Cardiac septum (tissue), 1 donor: ENCODE measurements at regions of chr5 and their contacts with region 1.

Region 1: GRCh38 chr5:140690941-140691924 is at the starts of genes HARS1 and HARS2:
- DNase-seq: peak; percentile 96
- total RNA-seq, gene HARS1: 37.8 TPM
- total RNA-seq, gene HARS2: 29.7 TPM

Region 2: DNA sequence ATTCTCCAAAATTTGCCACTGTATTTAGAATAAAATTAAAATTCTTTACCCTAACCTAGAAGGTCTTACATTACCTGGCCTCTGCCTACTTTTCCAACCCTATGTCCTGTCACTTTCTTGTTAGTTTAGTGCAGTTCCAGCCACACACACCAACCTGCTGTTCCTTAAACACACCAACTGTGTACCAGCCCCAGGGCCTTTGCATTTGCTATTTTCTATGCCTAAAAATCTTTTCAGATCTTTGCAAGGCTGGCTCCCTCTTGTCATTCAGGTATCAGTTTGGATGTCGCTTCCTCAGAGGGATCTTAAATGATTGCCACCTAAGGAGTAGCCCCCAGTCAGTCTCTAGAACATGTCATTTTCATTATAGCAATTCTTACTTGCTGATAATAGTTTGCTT is 630.4 kb before region 1 on chr5:
- intact Hi-C with region 1: no loop called
- DNase-seq: no peak

Region 3: DNA sequence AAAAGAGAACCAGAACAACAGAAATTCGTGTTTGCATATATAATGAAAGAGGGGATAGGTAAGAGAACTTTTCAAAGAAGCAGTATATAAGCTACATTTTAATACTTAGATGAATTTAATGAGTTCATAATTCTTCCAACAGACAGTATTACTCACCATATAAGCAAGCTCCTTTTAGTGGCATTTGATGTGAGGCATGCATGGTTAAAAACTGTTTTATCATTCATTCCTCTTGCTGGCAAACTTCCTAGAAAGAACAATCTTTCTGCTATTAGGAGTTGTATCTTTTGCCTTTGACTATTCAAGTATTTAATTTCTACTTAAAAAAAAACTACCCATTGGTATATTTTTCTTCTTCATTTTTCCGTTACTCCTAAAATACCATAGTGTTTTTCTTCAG is 209.5 kb before region 1 on chr5:
- intact Hi-C with region 1: no loop called
- DNase-seq: no peak

Region 4: DNA sequence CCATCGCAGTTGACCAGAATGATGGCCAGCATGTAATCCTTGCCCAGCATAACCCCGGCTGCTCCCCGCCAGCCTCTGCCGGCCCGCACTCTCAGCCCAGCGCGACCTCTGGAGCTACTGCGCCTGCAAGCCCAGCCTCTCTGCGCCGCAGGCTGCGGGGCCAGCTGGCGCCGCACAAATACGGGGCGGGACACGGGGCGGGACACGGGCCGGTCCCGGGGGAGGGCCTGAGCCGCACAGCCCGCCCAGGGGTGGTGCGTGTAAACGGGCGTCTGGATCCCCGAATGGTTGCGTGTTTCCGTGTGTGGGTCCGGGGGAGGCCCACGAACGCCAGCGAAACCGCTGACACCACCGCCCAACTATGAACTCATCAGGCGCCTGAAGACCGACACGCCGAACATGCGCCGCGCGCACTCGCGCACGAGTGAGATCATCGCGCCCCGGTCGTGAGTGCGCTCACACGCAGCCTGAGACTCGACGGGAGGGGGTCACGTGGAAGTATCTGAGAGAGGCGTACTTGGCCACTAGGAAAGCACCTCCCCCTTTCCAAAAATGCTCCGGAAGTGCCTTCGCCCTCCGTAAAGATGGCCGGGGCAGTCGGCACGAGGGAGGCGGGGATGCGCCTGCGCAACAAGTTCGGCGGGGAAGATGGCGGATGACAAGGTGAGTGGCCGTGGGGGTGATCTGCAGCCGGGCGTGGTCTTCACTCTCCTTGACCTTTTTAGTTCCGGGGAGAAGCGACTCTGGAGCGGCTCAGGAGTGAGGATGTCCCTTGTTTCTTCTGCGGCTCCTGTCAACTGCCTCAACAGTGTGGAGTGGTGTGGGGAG is 126.8 kb before region 1 on chr5 and contains the starts of genes APBB3 and SLC35A4:
- intact Hi-C with region 1: loop called (anchors 2 kb)
- DNase-seq: peak; percentile 98
- total RNA-seq, gene APBB3: 18.4 TPM
- total RNA-seq, gene SLC35A4: 81.8 TPM

Region 5: GRCh38 chr5:140647042-140647341 is 44.2 kb before region 1 on chr5:
- intact Hi-C with region 1: loop called (anchors 2 kb)
- DNase-seq: no peak

Region 6: GRCh38 chr5:140664359-140665119 is 26.7 kb before region 1 on chr5 and contains the start of gene WDR55:
- intact Hi-C with region 1: loop called (anchors 1 kb)
- DNase-seq: peak; percentile 99
- total RNA-seq, gene WDR55: 12.0 TPM